Activated naive CD4-positive, alpha-beta T cell treated with anti-CD3 and anti-CD28 coated beads for 36 hours (primary cell): ENCODE measurements at regions of chr4 and their contacts with region 1.

Region 1: DNA sequence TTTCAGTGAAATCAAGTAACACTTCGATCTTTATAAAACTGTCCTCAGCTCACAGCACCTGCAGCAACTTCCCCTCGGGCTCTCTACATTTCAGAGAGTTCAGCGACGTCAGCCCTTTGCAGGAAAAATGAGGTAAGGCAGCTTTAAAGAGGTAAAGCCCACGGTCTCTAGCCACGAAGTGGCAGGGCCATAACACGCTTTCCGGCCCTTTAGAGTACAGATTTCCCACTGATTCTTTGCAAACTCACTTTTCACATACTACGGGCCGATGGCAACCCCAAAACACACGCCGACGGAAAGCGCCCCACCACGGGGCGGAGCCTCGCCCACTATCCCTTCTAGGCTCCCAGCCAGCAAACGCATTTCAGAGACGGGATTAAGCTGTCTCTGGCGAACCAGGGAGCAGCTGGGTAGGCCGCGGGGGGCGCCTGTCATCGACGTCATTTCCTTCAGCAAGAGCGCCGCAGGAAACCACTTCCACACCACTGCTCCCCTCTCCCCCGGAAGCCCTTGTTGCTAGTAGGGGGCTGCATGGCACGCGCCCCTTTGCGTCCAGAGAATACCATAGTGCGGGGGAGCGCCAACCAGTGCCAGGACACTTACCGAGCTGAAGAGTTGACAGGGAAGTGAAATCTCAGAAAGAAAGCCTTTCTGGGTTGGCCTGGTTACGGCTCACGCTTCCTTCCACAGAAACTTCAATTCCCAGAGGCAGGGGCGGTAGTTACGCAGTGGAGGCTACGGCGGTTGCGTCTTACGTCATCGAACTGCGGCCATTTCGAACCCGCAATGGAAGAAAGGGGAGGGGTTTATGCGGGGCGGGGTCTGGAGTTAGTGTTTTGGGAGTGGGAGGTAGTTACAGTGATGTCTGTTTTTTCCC is at the start of gene TRMT10A:
- DNase-seq: peak; percentile 97
- H3K4me3 Mint-ChIP-seq: peak within 1 kb of the TSS; percentile 93
- H3K27ac Mint-ChIP-seq: peak within 1 kb of the TSS; percentile 96
- H3K4me1 Mint-ChIP-seq: peaks cover 14% of the 10 kb centered on the region
- H3K27me3 Mint-ChIP-seq: peaks cover 6% of the 10 kb centered on the region
- total RNA-seq, gene TRMT10A: 8.8 to 9.2 TPM

Region 2: DNA sequence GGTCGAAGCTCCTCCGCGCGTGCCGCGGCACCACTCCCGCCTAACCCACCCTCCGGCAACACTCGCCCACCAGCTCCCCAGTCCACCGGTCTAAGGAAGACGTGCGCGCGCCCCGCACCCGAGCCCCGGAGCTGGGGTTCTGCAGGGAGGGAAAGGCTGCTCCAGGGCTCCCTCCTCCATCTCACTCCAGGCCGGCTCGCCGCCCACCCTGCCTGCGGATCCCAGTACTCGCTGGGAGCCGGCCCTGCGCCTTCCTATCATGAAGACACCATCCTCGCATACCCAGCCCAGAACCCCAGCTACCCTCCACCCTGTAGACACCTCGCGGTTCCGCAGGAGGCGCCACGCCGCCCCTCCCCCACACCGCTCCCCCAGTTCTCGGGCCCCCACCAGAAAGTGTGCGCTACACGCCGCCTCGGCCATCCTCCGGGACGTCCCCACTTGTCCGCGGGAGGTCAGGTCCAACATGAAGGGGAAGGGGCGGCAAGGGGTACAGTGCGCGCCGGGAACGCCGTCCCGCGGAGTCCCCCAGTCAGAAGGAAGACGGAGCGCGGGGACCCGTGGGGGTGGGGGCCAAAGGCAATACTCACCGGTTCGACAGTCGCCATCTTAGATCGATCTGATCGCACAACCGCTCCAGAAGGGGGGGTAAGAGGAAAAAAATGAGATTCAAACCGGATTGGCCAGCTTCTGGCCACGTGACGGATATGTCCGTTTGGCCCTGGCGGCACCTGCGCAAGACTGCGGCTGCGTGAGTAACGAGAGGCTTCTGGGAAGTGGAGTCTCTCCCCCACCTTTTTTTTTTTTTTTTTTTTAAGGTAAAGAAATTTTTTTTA is 634.8 kb before region 1 on chr4 and contains the start of gene EIF4E:
- CTCF ChIA-PET with region 1: no interaction called
- intact Hi-C with region 1: loop called (anchors 1 kb)
- DNase-seq: peak; percentile 98
- H3K4me3 Mint-ChIP-seq: peak within 1 kb of the TSS; percentile 87
- H3K27ac Mint-ChIP-seq: peak within 1 kb of the TSS; percentile 99
- H3K4me1 Mint-ChIP-seq: peaks cover 39% of the 10 kb centered on the region
- H3K27me3 Mint-ChIP-seq: no peaks in the 10 kb centered on the region
- total RNA-seq, gene EIF4E: 104 to 116 TPM

Region 3: DNA sequence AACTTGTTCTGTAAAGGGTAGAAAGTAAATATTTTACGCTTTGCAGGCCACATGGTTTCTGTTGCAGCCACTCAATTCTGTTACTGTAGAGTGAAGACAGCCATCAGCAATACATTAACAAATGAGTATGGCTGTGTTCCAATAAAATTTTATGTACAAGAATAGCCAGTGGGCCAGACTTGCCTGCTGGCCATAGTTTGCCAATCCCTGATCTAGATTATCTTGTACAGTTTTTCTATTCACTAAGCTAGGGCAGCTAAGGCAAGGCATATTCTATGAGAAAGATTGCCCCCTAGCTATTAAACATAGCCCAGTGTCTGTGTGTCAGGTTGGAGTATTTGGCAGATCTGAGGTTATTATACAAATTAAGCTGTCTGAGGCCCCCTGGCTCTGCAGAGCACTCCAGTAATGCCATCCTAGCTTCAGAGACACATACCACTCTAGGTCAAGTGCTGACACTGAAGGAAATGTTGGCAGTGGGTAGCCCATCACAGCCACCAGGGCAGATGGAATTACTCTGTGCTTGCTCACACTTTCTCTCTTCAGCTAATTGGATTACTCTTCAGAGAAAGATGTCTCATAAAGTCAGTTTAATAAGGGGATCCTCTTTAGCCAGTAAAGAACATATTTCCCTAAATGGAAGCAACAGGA is 51.7 kb after region 1 on chr4:
- CTCF ChIA-PET with region 1: no interaction called
- intact Hi-C with region 1: loop called (anchors 2 kb)
- DNase-seq: no peak
- H3K4me3 Mint-ChIP-seq: no peak overlapping the region
- H3K27ac Mint-ChIP-seq: no peak overlapping the region
- H3K4me1 Mint-ChIP-seq: no peaks in the 10 kb centered on the region
- H3K27me3 Mint-ChIP-seq: peaks cover 5% of the 10 kb centered on the region

Region 4: GRCh38 chr4:99763635-99764101 is 200.1 kb after region 1 on chr4:
- CTCF ChIA-PET with region 1: no interaction called
- intact Hi-C with region 1: loop called (anchors 2 kb)
- DNase-seq: peak; percentile 38
- H3K4me3 Mint-ChIP-seq: no peak overlapping the region
- H3K27ac Mint-ChIP-seq: no peak overlapping the region
- H3K4me1 Mint-ChIP-seq: peaks cover 27% of the 10 kb centered on the region
- H3K27me3 Mint-ChIP-seq: peaks cover 13% of the 10 kb centered on the region

Region 5: GRCh38 chr4:99855678-99856077 is 292.1 kb after region 1 on chr4:
- CTCF ChIA-PET with region 1: no interaction called
- intact Hi-C with region 1: loop called (anchors 1 kb)
- DNase-seq: peak; percentile 43
- H3K4me3 Mint-ChIP-seq: no peak overlapping the region
- H3K27ac Mint-ChIP-seq: peak overlapping the region; percentile 74
- H3K4me1 Mint-ChIP-seq: peaks cover 66% of the 10 kb centered on the region
- H3K27me3 Mint-ChIP-seq: no peaks in the 10 kb centered on the region

Region 6: DNA sequence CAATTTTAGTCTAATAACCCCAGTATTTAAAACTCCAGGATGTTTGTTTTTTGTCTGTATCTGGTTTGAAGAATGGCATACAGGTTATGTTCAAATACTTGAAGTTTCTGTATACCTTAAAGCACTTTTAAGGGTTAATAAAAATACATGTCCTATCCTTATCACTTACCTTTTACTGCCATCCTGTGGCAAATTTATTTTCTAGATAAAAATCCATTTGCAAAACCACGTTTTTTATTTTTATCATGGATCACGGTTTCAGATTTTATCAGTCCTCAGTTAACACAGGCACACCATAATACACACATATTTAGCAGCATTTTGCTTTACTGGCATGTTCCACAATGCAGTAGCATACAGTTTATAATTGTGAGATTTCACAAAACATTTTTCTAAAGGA is 499.8 kb after region 1 on chr4:
- CTCF ChIA-PET with region 1: no interaction called
- intact Hi-C with region 1: loop called (anchors 1 kb)
- DNase-seq: no peak
- H3K4me3 Mint-ChIP-seq: no peak overlapping the region
- H3K27ac Mint-ChIP-seq: no peak overlapping the region
- H3K4me1 Mint-ChIP-seq: no peaks in the 10 kb centered on the region
- H3K27me3 Mint-ChIP-seq: peaks cover 20% of the 10 kb centered on the region